Naive thymus-derived CD4-positive, alpha-beta T cell (primary cell): ENCODE measurements at regions of chr17 and their contacts with region 1.

Region 1: GRCh38 chr17:79082311-79083190 is 7.9 kb downstream of the ENGASE start:
- DNase-seq: peak in 8 of 9 donors; percentile 33 to 67 (median 51)
- ATAC-seq: peak; percentile 69
- H3K4me3 ChIP-seq: no peak overlapping the region
- H3K4me3 Mint-ChIP-seq: no peak overlapping the region
- H3K27ac ChIP-seq: no peak overlapping the region
- H3K27ac Mint-ChIP-seq: no peak overlapping the region
- H3K4me1 ChIP-seq: no peaks in the 10 kb centered on the region
- H3K4me1 Mint-ChIP-seq: peaks cover 0 to 7% (median 0%) of the 10 kb centered on the region in 7 donors
- H3K27me3 ChIP-seq: no peaks in the 10 kb centered on the region
- H3K27me3 Mint-ChIP-seq: no peaks in the 10 kb centered on the region

Region 2: GRCh38 chr17:79019632-79020584 is 62.6 kb before region 1 on chr17:
- CTCF ChIA-PET with region 1: no interaction called
- POLR2A ChIA-PET with region 1: no interaction called
- intact Hi-C with region 1: loop called in 1 of 2 experiments (anchors 2 kb)
- DNase-seq: peak in 7 of 9 donors; percentile 26 to 66 (median 47)
- ATAC-seq: peak; percentile 63
- H3K4me3 ChIP-seq: no peak overlapping the region
- H3K4me3 Mint-ChIP-seq: no peak overlapping the region
- H3K27ac ChIP-seq: no peak overlapping the region
- H3K27ac Mint-ChIP-seq: no peak overlapping the region
- H3K4me1 ChIP-seq: peaks cover 3 to 4% of the 10 kb centered on the region in 2 donors
- H3K4me1 Mint-ChIP-seq: peaks cover 0 to 9% (median 6%) of the 10 kb centered on the region in 7 donors
- H3K27me3 ChIP-seq: no peaks in the 10 kb centered on the region
- H3K27me3 Mint-ChIP-seq: peaks cover 4 to 60% (median 13%) of the 10 kb centered on the region in 5 donors

Region 3: DNA sequence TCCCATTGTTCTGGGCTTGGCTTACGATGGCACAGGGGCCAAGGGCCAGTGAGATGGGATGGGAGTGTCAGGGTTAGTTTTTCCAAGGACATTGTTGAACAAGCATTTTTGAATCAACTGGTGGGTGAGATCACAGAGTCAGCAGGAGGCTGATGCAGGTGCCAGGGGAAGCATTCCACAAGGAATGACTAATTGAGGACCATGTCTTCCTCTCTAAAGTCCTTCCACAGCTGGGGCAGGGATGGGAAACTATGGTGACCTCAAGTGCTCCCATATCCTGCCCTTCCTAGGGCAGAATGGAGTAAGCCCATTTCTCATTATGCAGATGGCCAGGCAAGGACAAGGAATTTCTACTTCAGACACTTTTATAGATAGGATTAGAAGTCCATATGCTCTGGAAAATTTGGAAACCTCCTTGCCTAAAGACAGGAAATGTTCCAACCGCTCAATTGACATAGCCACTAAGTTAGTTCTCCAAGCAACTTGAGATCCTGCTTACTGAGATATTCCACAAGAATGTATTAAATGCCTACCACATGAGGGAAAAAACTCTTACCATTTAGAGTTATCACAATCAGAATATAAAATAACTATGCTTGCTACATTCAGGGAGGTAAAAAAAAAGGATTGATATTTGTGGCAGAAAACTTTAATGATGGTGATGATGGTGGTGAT is 29.2 kb before region 1 on chr17:
- CTCF ChIA-PET with region 1: no interaction called
- POLR2A ChIA-PET with region 1: no interaction called
- intact Hi-C with region 1: no loop called
- DNase-seq: no peak
- ATAC-seq: no peak
- H3K4me3 ChIP-seq: no peak overlapping the region
- H3K4me3 Mint-ChIP-seq: no peak overlapping the region
- H3K27ac ChIP-seq: no peak overlapping the region
- H3K27ac Mint-ChIP-seq: no peak overlapping the region
- H3K4me1 ChIP-seq: no peaks in the 10 kb centered on the region
- H3K4me1 Mint-ChIP-seq: peaks cover 0 to 6% (median 0%) of the 10 kb centered on the region in 7 donors
- H3K27me3 ChIP-seq: no peaks in the 10 kb centered on the region
- H3K27me3 Mint-ChIP-seq: peaks cover 0 to 18% (median 9%) of the 10 kb centered on the region in 5 donors

Region 4: DNA sequence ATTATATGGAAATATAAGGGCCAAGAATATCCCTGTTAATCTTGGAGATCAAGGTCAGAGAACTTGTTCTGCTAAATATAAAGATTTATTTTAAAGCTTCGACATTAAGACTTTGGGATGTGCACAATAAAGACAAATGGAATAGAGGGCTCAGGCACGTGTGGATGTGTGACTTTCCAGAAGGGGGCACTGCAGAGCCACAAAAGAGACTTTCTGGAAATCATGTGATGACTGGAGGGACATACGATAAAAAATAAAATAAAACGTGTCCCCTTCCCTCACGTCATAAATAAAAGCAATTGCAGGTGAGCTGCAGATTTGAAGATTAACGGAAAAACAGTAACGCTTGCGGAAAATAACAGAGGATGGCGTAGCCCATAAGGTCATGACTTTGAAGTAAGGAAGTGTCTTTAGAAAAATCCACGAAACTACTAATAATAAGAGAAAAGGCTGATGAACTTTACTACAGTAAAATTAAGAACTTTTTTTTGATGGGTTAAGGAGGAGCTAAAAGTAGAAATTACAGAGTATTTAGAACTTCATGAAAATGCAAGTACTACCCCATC is 17.4 kb before region 1 on chr17:
- CTCF ChIA-PET with region 1: interaction called, 23 read pairs
- POLR2A ChIA-PET with region 1: no interaction called
- intact Hi-C with region 1: loop called in 1 of 2 experiments (anchors 1 kb)
- DNase-seq: peak in 7 of 9 donors; percentile 28 to 69 (median 59)
- ATAC-seq: peak; percentile 78
- H3K4me3 ChIP-seq: no peak overlapping the region
- H3K4me3 Mint-ChIP-seq: peak overlapping the region in 3 of 10 donors; percentile 11 to 47 (median 44)
- H3K27ac ChIP-seq: no peak overlapping the region
- H3K27ac Mint-ChIP-seq: peak overlapping the region in 2 of 9 donors; percentile 4 to 34
- H3K4me1 ChIP-seq: peaks cover 0 to 4% of the 10 kb centered on the region in 2 donors
- H3K4me1 Mint-ChIP-seq: peaks cover 0 to 5% (median 4%) of the 10 kb centered on the region in 7 donors
- H3K27me3 ChIP-seq: no peaks in the 10 kb centered on the region
- H3K27me3 Mint-ChIP-seq: peaks cover 0 to 4% (median 0%) of the 10 kb centered on the region in 5 donors

Region 5: DNA sequence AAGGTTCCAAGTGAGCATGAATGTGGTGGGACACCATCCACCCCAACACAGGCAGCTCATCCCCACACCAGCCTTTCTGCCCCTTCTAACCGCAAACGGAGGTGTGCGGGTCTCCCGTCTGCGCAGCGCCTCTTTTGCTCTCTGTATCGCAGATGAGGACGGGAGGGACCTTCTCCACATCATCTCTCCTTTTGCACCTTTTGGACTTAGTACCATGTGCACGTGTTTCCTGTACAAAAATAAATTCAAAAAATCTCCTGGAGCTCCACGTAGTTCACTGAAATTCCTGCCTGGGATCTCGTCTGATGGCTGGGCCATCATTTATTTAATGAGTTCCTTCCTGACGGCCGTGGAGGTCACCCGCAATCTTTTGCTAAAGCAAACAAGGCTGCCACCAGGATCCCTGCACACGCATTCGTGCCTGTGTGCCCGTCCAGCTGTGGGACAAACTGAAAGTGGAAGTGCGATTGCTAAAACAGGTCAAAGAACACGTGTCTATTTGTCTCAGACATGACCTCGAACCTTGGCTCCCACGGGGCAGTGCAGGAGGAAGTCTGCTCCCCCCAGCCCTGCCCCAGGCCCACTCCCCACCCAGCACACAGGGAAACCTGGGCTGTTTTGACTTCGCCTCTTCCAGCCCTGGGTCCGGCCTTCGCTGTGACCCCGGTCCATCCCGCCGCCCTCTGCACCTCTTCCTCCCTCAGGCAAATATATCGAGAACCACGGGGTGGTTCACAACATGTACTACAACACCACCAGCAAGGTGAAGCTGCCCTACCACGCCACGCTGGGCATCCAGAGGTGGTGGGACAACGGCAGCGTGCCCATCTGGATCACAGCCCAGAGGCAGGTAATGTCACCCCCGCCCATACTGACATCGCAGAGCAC is 650.5 kb after region 1 on chr17:
- CTCF ChIA-PET with region 1: no interaction called
- POLR2A ChIA-PET with region 1: no interaction called
- intact Hi-C with region 1: no loop called
- DNase-seq: peak in 1 of 9 donors; percentile 17
- ATAC-seq: peak; percentile 39
- H3K4me3 ChIP-seq: no peak overlapping the region
- H3K4me3 Mint-ChIP-seq: peak overlapping the region in 7 of 10 donors; percentile 65 to 86 (median 76)
- H3K27ac ChIP-seq: no peak overlapping the region
- H3K27ac Mint-ChIP-seq: peak overlapping the region in 7 of 9 donors; percentile 36 to 93 (median 73)
- H3K4me1 ChIP-seq: peaks cover 4 to 12% of the 10 kb centered on the region in 2 donors
- H3K4me1 Mint-ChIP-seq: peaks cover 5 to 32% (median 19%) of the 10 kb centered on the region in 7 donors
- H3K27me3 ChIP-seq: no peaks in the 10 kb centered on the region
- H3K27me3 Mint-ChIP-seq: peaks cover 0 to 6% (median 0%) of the 10 kb centered on the region in 5 donors